Activated CD4-positive, alpha-beta T cell treated with anti-CD3 and anti-CD28 coated beads for 36 hours (primary cell): ENCODE measurements at regions of chr16 and their contacts with region 1.

Region 1: DNA sequence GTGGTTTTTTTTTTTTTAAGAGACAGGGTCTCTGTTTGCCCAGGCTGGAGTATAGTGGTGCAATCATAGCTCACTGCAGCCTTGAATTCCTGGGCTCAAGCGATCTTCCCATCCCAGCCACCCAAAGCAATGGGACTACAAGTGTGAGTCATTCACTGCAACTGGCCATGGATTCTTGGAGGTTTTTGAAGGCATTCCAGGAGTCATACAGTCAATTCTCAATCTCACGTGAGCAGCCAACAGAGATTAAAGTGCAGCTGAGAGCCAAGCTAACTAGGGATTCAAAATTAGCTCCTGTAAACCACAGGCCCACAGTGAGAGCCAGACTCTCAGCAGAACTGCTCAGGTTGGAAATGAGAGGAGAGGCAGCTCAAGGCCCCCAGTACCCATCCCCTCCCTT is 30.2 kb downstream of the XPO6 start:
- DNase-seq: no peak
- ATAC-seq: peak; percentile 28
- H3K4me3 Mint-ChIP-seq: peak overlapping the region; percentile 64
- H3K27ac Mint-ChIP-seq: peak overlapping the region; percentile 98
- H3K4me1 Mint-ChIP-seq: peaks cover 78% of the 10 kb centered on the region
- H3K27me3 Mint-ChIP-seq: no peaks in the 10 kb centered on the region

Region 2: GRCh38 chr16:28166394-28167208 is 14.9 kb before region 1 on chr16:
- CTCF ChIA-PET with region 1: interaction called, 3 read pairs
- POLR2A ChIA-PET with region 1: no interaction called
- intact Hi-C with region 1: loop called (anchors 1 kb)
- DNase-seq: peak; percentile 53
- ATAC-seq: peak; percentile 92
- H3K4me3 Mint-ChIP-seq: no peak overlapping the region
- H3K27ac Mint-ChIP-seq: peak overlapping the region; percentile 67
- H3K4me1 Mint-ChIP-seq: peaks cover 83% of the 10 kb centered on the region
- H3K27me3 Mint-ChIP-seq: no peaks in the 10 kb centered on the region

Region 3: GRCh38 chr16:28193530-28194423 is 12.3 kb after region 1 on chr16:
- CTCF ChIA-PET with region 1: interaction called, 30 read pairs
- POLR2A ChIA-PET with region 1: interaction called, 8 read pairs
- intact Hi-C with region 1: no loop called
- DNase-seq: peak; percentile 78
- ATAC-seq: peak; percentile 67
- H3K4me3 Mint-ChIP-seq: peak overlapping the region; percentile 66
- H3K27ac Mint-ChIP-seq: peak overlapping the region; percentile 92
- H3K4me1 Mint-ChIP-seq: peaks cover 81% of the 10 kb centered on the region
- H3K27me3 Mint-ChIP-seq: no peaks in the 10 kb centered on the region

Region 4: GRCh38 chr16:28277537-28278388 is 96.2 kb after region 1 on chr16:
- CTCF ChIA-PET with region 1: no interaction called
- POLR2A ChIA-PET with region 1: no interaction called
- intact Hi-C with region 1: no loop called
- DNase-seq: peak; percentile 91
- ATAC-seq: peak; percentile 85
- H3K4me3 Mint-ChIP-seq: peak overlapping the region; percentile 60
- H3K27ac Mint-ChIP-seq: peak overlapping the region; percentile 38
- H3K4me1 Mint-ChIP-seq: peaks cover 35% of the 10 kb centered on the region
- H3K27me3 Mint-ChIP-seq: peaks cover 4% of the 10 kb centered on the region